Ovary (tissue), 10 donors: ENCODE measurements at regions of chr17 and their contacts with region 1.

Region 1: GRCh38 chr17:82781894-82782274 is 30.0 kb downstream of the TBCD start:
- DNase-seq: peak; percentile 71 to 89 (median 84)
- H3K4me3 ChIP-seq: no peak overlapping the region
- H3K27ac ChIP-seq: no peak overlapping the region
- H3K4me1 ChIP-seq: no peaks in the 10 kb centered on the region
- H3K27me3 ChIP-seq: no peaks in the 10 kb centered on the region
- CTCF ChIP-seq: peak; percentile 74 to 89 (median 89)
- EP300 ChIP-seq: no peak
- POLR2A ChIP-seq: no peak

Region 2: DNA sequence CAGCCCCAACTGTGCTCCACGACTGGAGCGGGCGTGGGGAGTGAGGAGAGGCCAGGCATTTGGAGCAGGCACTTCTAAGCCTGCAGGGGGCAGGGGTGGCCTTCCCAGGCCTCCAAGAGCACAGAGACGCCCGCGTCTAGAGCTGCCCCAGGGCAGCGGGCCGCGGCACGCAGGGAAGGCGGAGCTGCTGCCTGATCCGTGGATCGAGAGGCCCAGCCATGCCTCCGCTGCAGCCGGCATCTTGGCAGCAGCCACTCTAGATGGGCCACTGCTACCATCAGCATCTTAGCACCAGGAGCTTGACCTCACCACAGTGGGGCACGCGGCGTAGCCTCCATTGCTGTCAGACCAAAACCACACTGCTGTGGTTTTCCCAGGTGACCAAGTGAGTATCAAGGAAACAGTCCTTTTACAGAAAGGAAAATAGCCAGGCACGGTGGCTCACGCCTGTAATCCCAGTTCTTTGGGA is 113.2 kb before region 1 on chr17:
- intact Hi-C with region 1: no loop called
- DNase-seq: peak in 4 of 5 donors; percentile 34 to 56 (median 53)
- H3K4me3 ChIP-seq: no peak overlapping the region
- H3K27ac ChIP-seq: peak overlapping the region; percentile 66 to 92
- H3K4me1 ChIP-seq: peaks cover 3% of the 10 kb centered on the region
- H3K27me3 ChIP-seq: no peaks in the 10 kb centered on the region
- CTCF ChIP-seq: no peak
- EP300 ChIP-seq: no peak
- POLR2A ChIP-seq: no peak

Region 3: DNA sequence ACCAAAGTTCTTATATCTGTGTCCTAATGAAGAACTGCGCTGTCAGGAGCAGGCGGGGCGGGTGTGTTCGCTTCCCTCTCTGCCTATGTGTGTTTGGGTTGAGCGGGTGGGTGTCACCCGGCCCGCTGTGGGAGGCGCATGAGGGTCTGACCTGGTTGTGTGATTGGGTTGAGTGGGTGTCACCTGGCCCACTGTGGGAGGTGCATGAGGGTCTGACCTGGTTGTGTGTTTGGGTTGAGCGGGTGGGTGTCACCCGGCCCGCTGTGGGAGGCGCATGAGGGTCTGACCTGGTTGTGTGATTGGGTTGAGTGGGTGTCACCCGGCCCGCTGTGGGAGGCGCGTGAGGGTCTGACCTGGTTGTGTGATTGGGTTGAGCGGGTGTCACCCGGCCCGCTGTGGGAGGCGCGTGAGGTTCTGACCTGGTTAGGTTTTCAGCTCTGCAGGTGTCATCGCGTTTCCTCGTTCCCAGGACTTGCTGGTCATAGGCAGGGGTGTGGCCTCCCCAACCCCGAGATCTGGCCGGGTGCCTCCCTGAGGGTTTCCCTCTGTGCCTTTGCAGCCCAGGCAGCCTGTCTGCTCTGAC is 127.5 kb after region 1 on chr17:
- intact Hi-C with region 1: loop called in 2 of 4 experiments (anchors 5 to 10 kb)
- DNase-seq: no peak
- H3K4me3 ChIP-seq: no peak overlapping the region
- H3K27ac ChIP-seq: no peak overlapping the region
- H3K4me1 ChIP-seq: peaks cover 3% of the 10 kb centered on the region
- H3K27me3 ChIP-seq: no peaks in the 10 kb centered on the region
- CTCF ChIP-seq: no peak
- EP300 ChIP-seq: no peak
- POLR2A ChIP-seq: no peak

Region 4: DNA sequence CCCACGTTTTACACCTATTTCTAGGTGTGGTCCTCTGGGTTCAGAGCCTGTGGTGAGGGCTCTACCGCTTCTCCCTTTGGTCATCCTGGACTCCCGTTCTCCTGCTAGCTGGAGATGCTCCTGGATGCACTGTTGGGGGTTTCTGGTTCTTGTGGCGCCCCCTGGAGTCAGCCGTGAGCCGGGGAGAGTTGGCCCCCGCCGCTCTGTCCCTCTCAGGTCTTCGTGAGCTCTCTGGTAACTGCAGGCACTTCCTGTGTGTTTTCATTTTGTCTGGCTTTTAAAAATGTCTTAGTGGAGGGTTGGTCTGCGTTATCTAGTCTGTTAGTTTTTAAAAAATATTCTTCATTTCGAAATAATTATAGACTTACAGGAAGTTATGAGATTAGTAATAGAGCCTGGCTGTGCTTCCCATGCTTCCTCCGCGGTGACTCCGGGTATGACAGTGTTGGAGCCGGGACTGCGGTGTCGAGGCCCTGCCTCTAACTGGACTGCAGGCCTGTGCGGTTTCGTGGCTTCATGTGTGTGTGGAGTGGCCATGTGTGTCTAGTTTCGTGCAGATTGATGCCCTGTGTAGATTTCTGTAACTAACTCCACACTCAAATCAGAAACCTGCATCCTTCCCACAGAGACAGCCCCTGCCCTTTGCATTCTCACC is 135.9 kb after region 1 on chr17:
- intact Hi-C with region 1: loop called in 1 of 4 experiments (anchors 10 kb)
- DNase-seq: no peak
- H3K4me3 ChIP-seq: no peak overlapping the region
- H3K27ac ChIP-seq: no peak overlapping the region
- H3K4me1 ChIP-seq: no peaks in the 10 kb centered on the region
- H3K27me3 ChIP-seq: no peaks in the 10 kb centered on the region
- CTCF ChIP-seq: no peak
- EP300 ChIP-seq: no peak
- POLR2A ChIP-seq: no peak